HepG2 (cell line): ENCODE measurements at regions of chr20 and their contacts with region 1.

Region 1: DNA sequence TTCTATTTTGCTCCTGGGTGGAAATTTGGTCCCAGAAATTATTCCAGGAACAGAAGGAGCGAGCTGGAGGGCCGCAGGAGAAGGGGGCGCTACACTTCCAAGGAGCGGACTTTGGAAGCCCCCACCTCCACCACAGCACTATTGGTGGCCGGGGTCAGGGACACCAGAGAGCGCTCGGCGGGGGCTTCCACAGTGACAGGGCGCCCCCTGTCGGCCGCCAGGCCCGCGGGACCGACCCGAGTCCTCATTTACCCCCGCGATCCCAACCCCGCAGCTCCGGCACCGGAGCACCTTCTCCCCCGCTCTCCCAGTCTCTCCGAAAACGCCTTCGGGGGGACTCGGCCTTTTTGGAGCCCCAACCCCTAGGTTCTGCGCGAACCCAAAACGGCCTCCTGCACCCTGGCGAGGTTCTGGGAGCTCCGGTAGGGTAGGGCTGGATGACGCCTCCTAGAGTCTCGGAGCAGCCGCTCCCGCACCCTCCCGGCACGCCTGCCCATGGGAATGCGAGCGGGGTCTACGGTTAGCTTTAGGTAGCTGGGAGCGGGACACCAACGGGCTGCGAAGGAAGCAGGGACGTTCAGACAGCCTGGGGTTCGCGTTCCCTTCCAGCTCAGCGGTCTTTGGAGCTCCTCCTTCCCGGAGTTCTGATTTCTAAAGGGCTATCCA is 2.4 kb upstream of the FOXA2 start:
- DNase-seq: peak; percentile 56
- ATAC-seq: peak; percentile 49
- H3K4me3 ChIP-seq: peak overlapping the region; percentile 58 to 80 (median 64)
- H3K27ac ChIP-seq: no peak overlapping the region
- H3K4me1 ChIP-seq: peaks cover 33% of the 10 kb centered on the region
- H3K27me3 ChIP-seq: peaks cover 3 to 36% of the 10 kb centered on the region in 2 experiments
- CTCF ChIP-seq: peak; percentile 96
- EP300 ChIP-seq: peak in 1 of 2 experiments; percentile 50; a peak in 1 of 4 replicates
- POLR2A ChIP-seq: no peak
- RAD21 ChIP-seq: peak; percentile 100

Region 2: GRCh38 chr20:22339091-22339881 is 247.5 kb before region 1 on chr20:
- CTCF ChIA-PET with region 1: interaction called, 76 read pairs
- POLR2A ChIA-PET with region 1: interaction called, 7 read pairs
- in situ Hi-C with region 1: loop called (anchors 5 kb)
- intact Hi-C with region 1: loop called (anchors 1 kb)
- DNase-seq: peak; percentile 84
- ATAC-seq: peak; percentile 77
- H3K4me3 ChIP-seq: no peak overlapping the region
- H3K27ac ChIP-seq: no peak overlapping the region
- H3K4me1 ChIP-seq: peaks cover 5% of the 10 kb centered on the region; the same call in 1 of the 2 replicates
- H3K27me3 ChIP-seq: peaks cover 0 to 9% of the 10 kb centered on the region in 2 experiments; a peak in 1 of 5 replicates
- CTCF ChIP-seq: peak; percentile 96
- EP300 ChIP-seq: no peak
- POLR2A ChIP-seq: no peak
- RAD21 ChIP-seq: peak; percentile 95

Region 3: DNA sequence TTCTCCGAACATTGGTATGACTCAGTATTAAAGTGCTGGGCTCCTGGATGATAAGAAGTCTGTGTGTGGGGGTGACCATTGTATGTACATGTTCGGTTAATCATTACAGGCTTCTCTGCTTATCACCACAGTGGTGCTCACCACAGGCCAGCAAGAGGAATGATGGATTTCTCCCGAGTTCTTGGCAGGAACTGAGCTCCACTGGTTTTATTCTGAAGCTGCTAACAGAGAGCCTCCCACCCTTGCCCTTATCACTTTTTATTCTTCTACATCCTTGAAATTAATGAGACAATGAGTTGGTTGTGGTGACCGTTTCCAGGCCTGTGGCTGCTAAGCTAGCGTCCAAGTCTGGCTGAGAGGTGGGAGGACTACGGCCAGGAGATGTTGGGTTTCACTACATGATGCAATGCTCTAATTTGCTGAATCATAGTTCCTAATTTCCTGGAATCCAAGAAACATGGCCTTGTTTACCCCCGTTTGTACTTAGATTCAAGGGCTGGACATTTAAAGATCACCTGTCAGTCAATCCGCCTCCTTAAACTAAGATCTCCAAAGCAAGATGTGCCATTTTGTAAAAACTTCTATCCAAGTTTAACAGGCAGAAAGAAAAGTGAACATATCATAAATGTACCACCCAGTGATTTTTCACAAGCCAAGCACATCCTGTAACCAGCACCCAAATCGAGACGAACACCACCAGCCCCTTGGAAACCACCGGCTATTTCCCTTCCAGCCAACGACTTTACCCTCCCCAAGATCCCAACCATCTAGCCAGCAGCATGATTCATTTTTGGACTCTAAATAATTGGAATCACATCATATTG is 174.9 kb before region 1 on chr20:
- CTCF ChIA-PET with region 1: no interaction called
- POLR2A ChIA-PET with region 1: interaction called, 17 read pairs
- in situ Hi-C with region 1: no loop called
- intact Hi-C with region 1: no loop called
- DNase-seq: peak; percentile 96
- ATAC-seq: peak; percentile 100
- H3K4me3 ChIP-seq: peak overlapping the region; percentile 17 to 56 (median 20); a peak in 4 of 6 replicates
- H3K27ac ChIP-seq: peak overlapping the region; percentile 77
- H3K4me1 ChIP-seq: peaks cover 57% of the 10 kb centered on the region
- H3K27me3 ChIP-seq: no peaks in the 10 kb centered on the region; a peak in 1 of 5 replicates
- CTCF ChIP-seq: 0 out of 2 replicates have a peak, but pooled peaks have one; percentile 4
- EP300 ChIP-seq: peak; percentile 51 to 89; a peak in 3 of 4 replicates
- POLR2A ChIP-seq: peak; percentile 69 to 73
- RAD21 ChIP-seq: no peak

Region 4: GRCh38 chr20:22471156-22471844 is 115.5 kb before region 1 on chr20:
- CTCF ChIA-PET with region 1: interaction called, 8 read pairs
- POLR2A ChIA-PET with region 1: interaction called, 17 read pairs
- in situ Hi-C with region 1: no loop called
- intact Hi-C with region 1: loop called (anchors 5 kb)
- DNase-seq: peak; percentile 72
- ATAC-seq: peak; percentile 44
- H3K4me3 ChIP-seq: peak overlapping the region in 1 of 3 experiments; percentile 4; a peak in 1 of 6 replicates
- H3K27ac ChIP-seq: peak overlapping the region; percentile 2
- H3K4me1 ChIP-seq: peaks cover 56% of the 10 kb centered on the region
- H3K27me3 ChIP-seq: peaks cover 7 to 17% of the 10 kb centered on the region in 2 experiments; a peak in 3 of 5 replicates
- CTCF ChIP-seq: no peak
- EP300 ChIP-seq: peak in 1 of 2 experiments; percentile 38; a peak in 1 of 4 replicates
- POLR2A ChIP-seq: no peak
- RAD21 ChIP-seq: no peak

Region 5: GRCh38 chr20:22523499-22524392 is 63.0 kb before region 1 on chr20:
- CTCF ChIA-PET with region 1: no interaction called
- POLR2A ChIA-PET with region 1: interaction called, 86 read pairs
- in situ Hi-C with region 1: no loop called
- intact Hi-C with region 1: loop called (anchors 1 kb)
- DNase-seq: peak; percentile 99
- ATAC-seq: peak; percentile 81
- H3K4me3 ChIP-seq: peak overlapping the region; percentile 39 to 69 (median 50); a peak in 5 of 6 replicates
- H3K27ac ChIP-seq: peak overlapping the region; percentile 89
- H3K4me1 ChIP-seq: peaks cover 67% of the 10 kb centered on the region
- H3K27me3 ChIP-seq: no peaks in the 10 kb centered on the region
- CTCF ChIP-seq: no peak
- EP300 ChIP-seq: peak; percentile 46 to 90
- POLR2A ChIP-seq: peak; percentile 74 to 85
- RAD21 ChIP-seq: peak; percentile 72

Region 6: GRCh38 chr20:22575087-22575721 is 11.6 kb before region 1 on chr20:
- CTCF ChIA-PET with region 1: no interaction called
- POLR2A ChIA-PET with region 1: interaction called, 51 read pairs
- in situ Hi-C with region 1: no loop called
- intact Hi-C with region 1: no loop called
- DNase-seq: peak; percentile 23
- ATAC-seq: no peak
- H3K4me3 ChIP-seq: peak overlapping the region in 2 of 3 experiments; percentile 32 to 95; a peak in 2 of 6 replicates
- H3K27ac ChIP-seq: peak overlapping the region; percentile 86
- H3K4me1 ChIP-seq: peaks cover 85% of the 10 kb centered on the region
- H3K27me3 ChIP-seq: no peaks in the 10 kb centered on the region; a peak in 1 of 5 replicates
- CTCF ChIP-seq: no peak
- EP300 ChIP-seq: no peak
- POLR2A ChIP-seq: no peak
- RAD21 ChIP-seq: no peak